ENCODE measurements at regions of chr18 and their contacts with region 1.

Region 1: DNA sequence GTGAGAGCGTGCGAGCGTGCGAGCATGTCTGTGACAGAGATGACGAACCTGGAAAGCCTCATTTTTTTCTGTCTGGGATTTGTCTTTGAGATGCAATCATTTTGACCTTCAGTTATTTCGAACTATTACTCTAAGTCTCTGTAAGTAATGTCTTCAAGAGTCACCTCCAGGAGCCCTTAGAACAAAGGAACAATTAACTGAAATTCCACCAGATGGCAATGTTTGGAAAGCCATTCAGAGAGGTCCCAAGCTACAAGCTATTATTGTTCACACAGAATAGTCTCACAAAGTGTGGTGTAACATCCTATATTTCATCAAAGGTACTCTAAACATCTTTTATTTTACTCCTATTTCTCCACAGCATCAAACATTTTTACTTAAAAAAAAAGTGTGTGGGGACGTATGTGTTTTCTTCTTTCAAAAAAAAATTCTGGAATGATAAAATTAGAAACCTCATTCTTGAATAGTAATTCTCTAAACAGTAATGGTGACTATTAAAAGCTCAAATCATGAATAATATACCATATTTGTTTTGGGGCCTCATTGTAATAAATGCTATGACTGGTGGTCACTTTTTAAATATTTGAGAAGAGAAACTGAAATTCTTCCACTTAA is 35.1 kb upstream of the MAPRE2 start:
- DNase-seq: peak in 4 of 14 experiments; percentile 4 to 75 (median 70)
- ATAC-seq: peak; percentile 88
- H3K4me3 ChIP-seq: no peak overlapping the region
- H3K4me3 Mint-ChIP-seq: no peak overlapping the region
- H3K27ac ChIP-seq: no peak overlapping the region
- H3K27ac Mint-ChIP-seq: no peak overlapping the region
- H3K4me1 ChIP-seq: no peaks in the 10 kb centered on the region
- H3K4me1 Mint-ChIP-seq: no peaks in the 10 kb centered on the region
- H3K27me3 ChIP-seq: no peaks in the 10 kb centered on the region
- H3K27me3 Mint-ChIP-seq: no peaks in the 10 kb centered on the region
- CTCF ChIP-seq: peak; percentile 54

Region 2: GRCh38 chr18:35071819-35072247 is 65.8 kb after region 1 on chr18:
- CTCF ChIA-PET with region 1: no interaction called
- POLR2A ChIA-PET with region 1: no interaction called
- intact Hi-C with region 1: loop called in 1 of 2 experiments (anchors 5 kb)
- DNase-seq: no peak
- ATAC-seq: no peak
- H3K4me3 ChIP-seq: no peak overlapping the region
- H3K4me3 Mint-ChIP-seq: no peak overlapping the region
- H3K27ac ChIP-seq: no peak overlapping the region
- H3K27ac Mint-ChIP-seq: peak overlapping the region; percentile 49
- H3K4me1 ChIP-seq: no peaks in the 10 kb centered on the region
- H3K4me1 Mint-ChIP-seq: peaks cover 82% of the 10 kb centered on the region
- H3K27me3 ChIP-seq: no peaks in the 10 kb centered on the region
- H3K27me3 Mint-ChIP-seq: no peaks in the 10 kb centered on the region
- CTCF ChIP-seq: no peak

Region 3: GRCh38 chr18:35085450-35086380 is 79.6 kb after region 1 on chr18:
- CTCF ChIA-PET with region 1: no interaction called
- POLR2A ChIA-PET with region 1: no interaction called
- intact Hi-C with region 1: no loop called
- DNase-seq: no peak
- ATAC-seq: no peak
- H3K4me3 ChIP-seq: no peak overlapping the region
- H3K4me3 Mint-ChIP-seq: no peak overlapping the region
- H3K27ac ChIP-seq: no peak overlapping the region
- H3K27ac Mint-ChIP-seq: no peak overlapping the region
- H3K4me1 ChIP-seq: no peaks in the 10 kb centered on the region
- H3K4me1 Mint-ChIP-seq: peaks cover 65% of the 10 kb centered on the region
- H3K27me3 ChIP-seq: no peaks in the 10 kb centered on the region
- H3K27me3 Mint-ChIP-seq: no peaks in the 10 kb centered on the region
- CTCF ChIP-seq: no peak

Region 4: DNA sequence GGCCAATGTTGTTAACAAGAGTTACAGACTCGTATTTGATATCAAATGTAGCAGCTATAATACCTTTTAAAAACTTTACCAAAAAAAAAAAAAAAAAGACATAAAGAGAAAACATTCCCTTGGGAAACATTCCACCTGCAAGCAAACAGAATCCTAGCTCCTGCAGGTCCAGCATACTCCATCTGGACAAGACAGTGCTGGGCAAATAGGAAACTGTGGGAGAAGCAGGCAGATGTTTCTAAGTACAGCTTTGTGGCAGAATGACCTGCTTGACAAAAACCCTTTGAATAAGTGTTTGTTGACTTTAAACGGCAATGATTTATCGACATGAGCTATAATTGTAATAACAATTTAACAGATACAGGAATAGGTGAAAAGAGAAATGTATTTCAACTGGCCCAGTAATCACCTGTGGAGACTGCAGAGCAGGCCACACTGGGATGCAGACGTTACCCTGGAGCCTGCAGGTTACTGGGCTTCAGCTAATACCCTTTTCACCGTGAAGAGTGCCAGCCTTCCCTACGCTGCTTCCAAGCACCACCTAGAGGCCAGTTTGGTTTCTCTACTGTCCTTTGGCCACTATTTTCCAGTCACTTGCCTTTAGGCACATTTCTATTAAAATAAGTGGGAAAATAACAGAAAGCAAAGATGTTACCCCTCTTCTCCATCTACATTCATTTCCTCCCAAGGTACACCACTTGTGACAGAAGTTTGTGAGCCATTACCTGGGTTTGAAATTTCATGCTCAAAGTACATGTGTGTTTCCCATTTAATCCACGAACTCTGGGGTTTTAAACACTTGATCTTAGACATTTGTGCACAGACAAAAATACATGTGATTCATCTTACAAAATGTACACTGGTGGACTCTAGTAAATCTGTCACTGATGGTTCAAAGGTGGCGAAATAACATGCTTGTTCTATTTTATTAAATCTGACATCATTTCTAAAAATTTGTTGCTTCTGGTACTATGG is 137.8 kb after region 1 on chr18:
- CTCF ChIA-PET with region 1: interaction called, 8 read pairs
- POLR2A ChIA-PET with region 1: no interaction called
- intact Hi-C with region 1: loop called (anchors 1 to 5 kb)
- DNase-seq: peak in 12 of 14 experiments; percentile 10 to 61 (median 26)
- ATAC-seq: peak; percentile 74
- H3K4me3 ChIP-seq: no peak overlapping the region
- H3K4me3 Mint-ChIP-seq: no peak overlapping the region
- H3K27ac ChIP-seq: no peak overlapping the region
- H3K27ac Mint-ChIP-seq: no peak overlapping the region
- H3K4me1 ChIP-seq: no peaks in the 10 kb centered on the region
- H3K4me1 Mint-ChIP-seq: no peaks in the 10 kb centered on the region
- H3K27me3 ChIP-seq: no peaks in the 10 kb centered on the region
- H3K27me3 Mint-ChIP-seq: no peaks in the 10 kb centered on the region
- CTCF ChIP-seq: peak; percentile 61

Region 5: DNA sequence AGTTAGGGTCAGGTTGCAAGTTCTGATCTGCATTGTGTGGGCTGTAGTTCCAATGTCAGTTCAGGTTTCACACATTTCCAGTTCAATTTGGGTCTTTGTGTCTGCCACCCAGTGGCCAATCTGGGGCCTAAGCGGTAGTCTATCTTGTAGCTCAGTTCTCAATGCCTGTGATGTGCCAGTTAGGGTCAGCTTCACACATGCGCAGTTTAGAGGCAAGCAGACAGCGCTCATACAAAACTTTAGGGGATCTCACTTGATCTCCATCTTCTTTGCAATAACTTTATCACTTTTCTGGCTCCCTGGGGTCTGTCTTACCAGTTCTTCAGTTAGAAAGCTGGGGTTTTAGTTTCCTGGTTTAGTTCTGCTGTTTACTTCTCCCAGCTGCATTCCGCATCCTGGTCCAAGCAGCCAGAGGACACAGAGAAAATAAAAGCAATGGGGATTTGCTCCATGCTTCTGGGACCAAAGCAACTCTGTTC is 349.1 kb after region 1 on chr18:
- CTCF ChIA-PET with region 1: interaction called, 4 read pairs
- POLR2A ChIA-PET with region 1: no interaction called
- intact Hi-C with region 1: loop called (anchors 1 to 5 kb)
- DNase-seq: peak; percentile 39 to 85 (median 48)
- ATAC-seq: peak; percentile 95
- H3K4me3 ChIP-seq: no peak overlapping the region
- H3K4me3 Mint-ChIP-seq: no peak overlapping the region
- H3K27ac ChIP-seq: no peak overlapping the region
- H3K27ac Mint-ChIP-seq: no peak overlapping the region
- H3K4me1 ChIP-seq: no peaks in the 10 kb centered on the region
- H3K4me1 Mint-ChIP-seq: peaks cover 4% of the 10 kb centered on the region
- H3K27me3 ChIP-seq: no peaks in the 10 kb centered on the region
- H3K27me3 Mint-ChIP-seq: no peaks in the 10 kb centered on the region
- CTCF ChIP-seq: peak; percentile 68

Measured in CD4-positive, alpha-beta T cell (primary cell).